Heart left ventricle (tissue), 16 donors: ENCODE measurements at regions of chr10 and their contacts with region 1.

Region 1: DNA sequence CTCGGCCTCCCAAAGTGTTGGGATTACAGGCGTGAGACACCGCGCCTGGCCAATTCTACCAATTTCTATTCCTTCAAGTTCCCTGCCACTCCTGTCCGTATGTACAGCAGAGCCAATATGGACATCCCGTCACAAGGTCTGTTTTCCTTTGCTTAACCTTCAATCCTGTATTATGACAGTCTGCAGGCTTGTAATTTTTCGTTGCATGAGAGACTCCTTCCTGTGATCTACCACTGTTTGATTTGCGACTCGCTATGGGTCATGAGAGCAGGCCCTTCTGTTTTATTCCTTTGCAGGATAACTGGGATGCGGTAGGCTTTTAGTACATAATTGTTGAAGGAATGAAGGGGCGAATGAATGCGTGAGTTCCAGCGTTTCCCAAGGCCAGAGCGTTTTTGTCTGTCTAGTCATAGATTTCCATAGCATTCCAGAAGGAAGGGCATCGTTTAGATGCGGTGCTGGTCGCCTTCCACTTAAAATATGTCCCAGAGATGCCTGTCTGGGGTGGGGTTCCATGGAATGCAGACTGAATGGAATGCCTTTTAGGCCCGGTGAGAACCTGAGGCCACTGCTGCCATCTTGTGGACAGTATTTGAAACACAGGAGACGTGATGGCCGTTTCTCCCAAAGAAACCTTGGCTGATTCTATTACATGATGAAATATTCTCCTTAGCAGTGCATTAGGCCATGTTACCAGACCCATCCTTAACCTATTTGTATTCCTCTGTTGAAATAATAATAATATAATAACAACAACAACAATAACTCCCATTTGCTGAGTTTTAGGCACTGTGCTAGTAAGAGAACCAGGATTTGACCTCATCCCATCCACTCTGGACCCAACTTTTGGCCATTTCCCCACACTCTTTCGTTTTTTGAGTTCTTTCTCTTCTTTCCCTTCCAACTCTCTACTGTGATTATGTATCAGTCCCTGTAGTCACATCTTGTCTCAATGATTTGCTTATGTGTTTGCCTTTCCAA is 193.2 kb downstream of the MYOF start:
- DNase-seq: peak in 4 of 5 donors; percentile 37 to 66 (median 55)
- ATAC-seq: peak; percentile 26 to 84 (median 76)
- H3K4me3 ChIP-seq: no peak overlapping the region
- H3K27ac ChIP-seq: no peak overlapping the region
- H3K4me1 ChIP-seq: peaks cover 0 to 3% (median 0%) of the 10 kb centered on the region in 12 donors
- H3K27me3 ChIP-seq: no peaks in the 10 kb centered on the region
- CTCF ChIP-seq: peak; percentile 69 to 87 (median 76)
- POLR2A ChIP-seq: no peak

Region 2: DNA sequence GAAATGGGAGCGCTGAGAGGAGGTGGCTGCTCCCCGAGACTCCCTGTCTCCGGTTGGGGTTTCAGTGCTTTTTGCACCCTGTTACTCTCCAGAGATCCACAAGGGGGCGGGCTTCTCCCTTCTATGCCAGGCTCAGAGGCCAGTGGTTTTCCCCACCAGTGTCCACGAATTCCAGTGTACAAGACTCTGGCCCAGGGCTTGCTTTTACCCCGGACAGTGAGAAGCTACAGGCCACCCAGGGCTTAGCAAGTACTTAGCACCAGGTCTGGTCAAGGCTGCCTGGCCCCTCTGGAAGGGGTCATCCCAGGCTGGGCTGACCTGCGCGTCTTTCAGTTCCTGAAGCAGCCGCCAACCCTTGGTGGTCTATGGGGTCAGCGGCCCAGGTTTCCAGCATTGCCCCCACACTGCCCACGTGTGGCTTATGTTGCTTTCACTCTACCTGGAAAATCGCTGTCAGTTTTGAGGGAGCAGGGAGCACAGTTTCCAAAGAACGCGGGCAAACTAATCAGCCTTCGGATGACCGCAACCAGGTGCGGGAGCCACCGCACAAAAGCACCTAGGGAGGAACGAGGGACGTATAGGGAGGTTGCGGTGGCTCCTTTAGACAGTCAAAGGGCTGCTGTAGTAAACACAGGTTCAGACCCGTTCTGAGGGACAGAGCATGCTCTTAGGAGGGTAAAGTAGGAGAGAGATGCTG is 208.4 kb before region 1 on chr10:
- intact Hi-C with region 1: loop called in 9 of 10 experiments (anchors 1 to 10 kb)
- DNase-seq: peak in 2 of 5 donors; percentile 49 to 54
- ATAC-seq: peak in 3 of 4 donors; percentile 58 to 70 (median 69)
- H3K4me3 ChIP-seq: no peak overlapping the region
- H3K27ac ChIP-seq: no peak overlapping the region
- H3K4me1 ChIP-seq: peaks cover 0 to 7% (median 0%) of the 10 kb centered on the region in 12 donors
- H3K27me3 ChIP-seq: peaks cover 0 to 54% (median 25%) of the 10 kb centered on the region in 9 donors
- CTCF ChIP-seq: peak; percentile 72 to 85 (median 79)
- POLR2A ChIP-seq: no peak

Region 3: GRCh38 chr10:93110472-93111146 is 178.3 kb before region 1 on chr10:
- intact Hi-C with region 1: loop called (anchors 1 to 10 kb)
- DNase-seq: no peak
- ATAC-seq: no peak
- H3K4me3 ChIP-seq: no peak overlapping the region
- H3K27ac ChIP-seq: no peak overlapping the region
- H3K4me1 ChIP-seq: no peaks in the 10 kb centered on the region
- H3K27me3 ChIP-seq: peaks cover 0 to 11% (median 0%) of the 10 kb centered on the region in 9 donors
- CTCF ChIP-seq: no peak
- POLR2A ChIP-seq: no peak

Region 4: GRCh38 chr10:93115661-93116383 is 173.1 kb before region 1 on chr10:
- intact Hi-C with region 1: loop called (anchors 1 to 10 kb)
- DNase-seq: peak; percentile 49 to 69 (median 55)
- ATAC-seq: peak in 3 of 4 donors; percentile 44 to 66 (median 62)
- H3K4me3 ChIP-seq: no peak overlapping the region
- H3K27ac ChIP-seq: no peak overlapping the region
- H3K4me1 ChIP-seq: no peaks in the 10 kb centered on the region
- H3K27me3 ChIP-seq: peaks cover 0 to 11% (median 0%) of the 10 kb centered on the region in 9 donors
- CTCF ChIP-seq: peak in 11 of 12 donors; percentile 12 to 49 (median 32)
- POLR2A ChIP-seq: no peak

Region 5: DNA sequence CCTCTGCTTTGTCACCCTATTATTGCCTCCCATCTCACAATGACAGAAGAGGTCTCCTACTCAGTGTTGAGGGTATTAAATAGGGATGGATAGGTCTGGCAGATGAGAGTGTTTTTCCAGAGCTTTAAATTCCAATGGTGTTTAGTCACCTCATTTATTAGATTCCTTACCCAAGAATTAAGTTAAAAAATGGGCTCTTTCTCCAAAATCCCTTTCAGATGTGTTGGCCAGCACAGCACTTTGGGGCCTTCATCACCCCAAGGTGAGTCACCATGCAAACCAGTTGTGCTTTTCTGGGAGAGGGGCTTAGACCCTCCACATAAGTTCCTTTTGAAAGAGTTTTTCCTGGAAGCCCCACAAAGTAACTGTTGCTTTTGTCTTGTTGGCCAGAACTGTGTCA is 136.8 kb before region 1 on chr10:
- intact Hi-C with region 1: no loop called
- DNase-seq: no peak
- ATAC-seq: no peak
- H3K4me3 ChIP-seq: no peak overlapping the region
- H3K27ac ChIP-seq: no peak overlapping the region
- H3K4me1 ChIP-seq: no peaks in the 10 kb centered on the region
- H3K27me3 ChIP-seq: peaks cover 0 to 10% (median 0%) of the 10 kb centered on the region in 9 donors
- CTCF ChIP-seq: no peak
- POLR2A ChIP-seq: no peak